Activated CD4-positive, alpha-beta T cell treated with anti-CD3 and anti-CD28 coated beads for 36 hours (primary cell): ENCODE measurements at regions of chr1 and their contacts with region 1.

Region 1: DNA sequence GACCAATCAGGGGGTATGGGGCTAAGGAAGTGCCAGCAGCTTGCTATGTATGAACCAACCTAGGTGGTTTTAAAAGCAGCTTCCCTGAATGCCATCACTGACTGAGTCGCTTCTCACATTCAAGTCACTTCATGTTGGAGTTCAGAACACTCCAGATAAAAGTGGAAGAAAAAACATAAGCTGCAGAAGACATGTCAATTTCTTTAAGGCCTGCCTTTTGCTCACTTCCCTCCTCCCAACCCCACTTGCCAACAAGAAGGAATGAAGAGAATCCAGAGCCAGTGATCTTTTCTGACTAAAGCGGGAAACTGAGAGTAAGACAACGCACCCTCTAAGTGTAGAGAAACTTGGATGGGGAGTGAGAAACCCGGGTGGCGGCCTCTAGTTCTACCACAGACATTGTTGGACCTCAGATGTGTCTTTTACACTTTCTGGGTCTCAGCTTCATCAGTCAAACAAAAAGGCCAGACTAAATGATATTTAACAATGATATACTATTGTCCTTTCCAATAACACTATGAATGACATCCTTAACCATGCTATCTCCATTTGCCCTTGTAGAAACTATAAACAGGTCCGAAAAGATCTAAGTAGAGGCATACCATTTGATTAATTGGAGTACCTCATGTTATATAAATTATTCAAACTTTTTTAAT is 54.1 kb downstream of the LUZP1 start:
- DNase-seq: peak; percentile 18
- ATAC-seq: no peak
- H3K4me3 Mint-ChIP-seq: no peak overlapping the region
- H3K27ac Mint-ChIP-seq: no peak overlapping the region
- H3K4me1 Mint-ChIP-seq: peaks cover 74% of the 10 kb centered on the region
- H3K27me3 Mint-ChIP-seq: no peaks in the 10 kb centered on the region

Region 2: DNA sequence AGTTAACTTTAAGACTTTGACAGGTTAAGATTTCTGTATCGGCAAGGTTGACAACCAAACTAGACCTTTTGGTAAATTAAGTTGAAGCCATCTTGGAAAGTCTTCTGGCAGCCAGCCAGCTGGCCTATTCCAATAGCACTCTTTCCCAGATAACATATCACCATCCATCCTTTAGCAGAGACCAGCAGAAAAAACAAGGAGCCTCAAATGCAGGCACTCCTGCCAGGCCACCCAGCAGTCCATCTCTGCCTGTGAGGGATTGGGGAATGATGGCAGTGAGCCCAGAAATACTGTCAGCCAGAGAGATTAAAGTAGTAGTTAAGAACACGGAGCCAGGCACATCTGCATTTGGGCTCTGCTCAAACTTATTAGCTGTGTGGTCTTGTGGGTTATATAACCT is 643.5 kb before region 1 on chr1:
- CTCF ChIA-PET with region 1: no interaction called
- POLR2A ChIA-PET with region 1: no interaction called
- intact Hi-C with region 1: no loop called
- DNase-seq: no peak
- ATAC-seq: no peak
- H3K4me3 Mint-ChIP-seq: no peak overlapping the region
- H3K27ac Mint-ChIP-seq: no peak overlapping the region
- H3K4me1 Mint-ChIP-seq: peaks cover 11% of the 10 kb centered on the region
- H3K27me3 Mint-ChIP-seq: no peaks in the 10 kb centered on the region

Region 3: GRCh38 chr1:23149114-23149513 is 34.6 kb after region 1 on chr1:
- CTCF ChIA-PET with region 1: interaction called, 4 read pairs
- POLR2A ChIA-PET with region 1: interaction called, 5 read pairs
- intact Hi-C with region 1: loop called in 1 of 2 experiments (anchors 5 kb)
- DNase-seq: no peak
- ATAC-seq: no peak
- H3K4me3 Mint-ChIP-seq: no peak overlapping the region
- H3K27ac Mint-ChIP-seq: no peak overlapping the region
- H3K4me1 Mint-ChIP-seq: peaks cover 20% of the 10 kb centered on the region
- H3K27me3 Mint-ChIP-seq: no peaks in the 10 kb centered on the region

Region 4: DNA sequence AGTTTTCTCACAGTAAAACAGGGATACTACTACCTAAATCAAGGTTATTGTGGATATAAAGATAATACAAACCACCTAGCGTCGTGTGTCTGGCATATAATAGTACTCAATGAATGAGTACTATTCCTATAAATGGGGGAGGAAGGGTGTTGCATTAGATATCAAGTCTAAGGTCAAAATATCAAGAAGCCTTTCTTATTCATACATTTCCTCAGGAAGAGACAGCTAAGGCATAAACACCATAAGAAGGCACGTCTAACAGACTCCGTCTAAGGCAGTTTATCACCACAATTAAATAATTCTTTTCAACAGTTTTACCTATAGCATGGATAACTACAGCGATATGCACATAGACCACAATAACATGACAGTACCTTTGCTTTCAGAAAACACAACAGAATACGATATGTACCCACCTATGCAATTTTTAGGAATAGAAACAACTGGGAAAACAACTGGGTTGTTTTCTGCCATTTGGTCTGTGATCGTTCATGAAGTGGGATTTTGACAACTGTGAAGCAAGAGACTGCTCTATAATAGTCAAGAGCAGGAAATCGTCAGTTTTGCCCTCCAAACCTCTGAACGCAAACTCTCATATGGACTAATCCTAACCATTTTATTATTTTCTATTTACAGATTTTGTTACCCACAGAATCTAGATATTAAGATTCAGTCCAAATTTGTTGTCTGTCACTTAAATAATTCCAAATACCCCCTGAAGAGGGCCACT is 176.4 kb after region 1 on chr1:
- CTCF ChIA-PET with region 1: no interaction called
- POLR2A ChIA-PET with region 1: no interaction called
- intact Hi-C with region 1: no loop called
- DNase-seq: no peak
- ATAC-seq: no peak
- H3K4me3 Mint-ChIP-seq: no peak overlapping the region
- H3K27ac Mint-ChIP-seq: no peak overlapping the region
- H3K4me1 Mint-ChIP-seq: no peaks in the 10 kb centered on the region
- H3K27me3 Mint-ChIP-seq: no peaks in the 10 kb centered on the region

Region 5: DNA sequence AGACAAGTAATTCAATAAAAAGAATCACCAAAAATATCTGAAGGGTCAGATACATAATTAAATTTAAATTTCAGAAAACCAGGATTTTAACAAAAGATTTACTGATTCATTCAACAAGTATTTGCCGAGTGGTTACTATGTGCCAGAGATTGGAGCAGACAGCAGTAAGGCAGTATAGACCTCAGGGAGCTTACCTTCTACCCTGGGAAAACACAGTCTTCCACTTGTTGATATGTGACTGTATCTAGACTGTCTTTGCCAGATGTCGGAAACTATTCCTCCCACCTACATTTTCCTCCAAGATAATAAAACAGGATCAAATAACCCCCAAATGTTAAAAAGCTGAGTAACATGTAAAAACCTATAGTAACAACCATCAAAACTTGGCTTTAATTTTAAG is 223.3 kb after region 1 on chr1:
- CTCF ChIA-PET with region 1: no interaction called
- POLR2A ChIA-PET with region 1: no interaction called
- intact Hi-C with region 1: no loop called
- DNase-seq: no peak
- ATAC-seq: no peak
- H3K4me3 Mint-ChIP-seq: no peak overlapping the region
- H3K27ac Mint-ChIP-seq: peak overlapping the region; percentile 21
- H3K4me1 Mint-ChIP-seq: peaks cover 59% of the 10 kb centered on the region
- H3K27me3 Mint-ChIP-seq: no peaks in the 10 kb centered on the region